ENCODE measurements at regions of chr2 and their contacts with region 1.

Region 1: GRCh38 chr2:65554765-65555591 is 122.6 kb upstream of the SPRED2 start:
- DNase-seq: no peak
- H3K4me3 ChIP-seq: no peak overlapping the region
- CTCF ChIP-seq: no peak
- POLR2A ChIP-seq: no peak

Region 2: DNA sequence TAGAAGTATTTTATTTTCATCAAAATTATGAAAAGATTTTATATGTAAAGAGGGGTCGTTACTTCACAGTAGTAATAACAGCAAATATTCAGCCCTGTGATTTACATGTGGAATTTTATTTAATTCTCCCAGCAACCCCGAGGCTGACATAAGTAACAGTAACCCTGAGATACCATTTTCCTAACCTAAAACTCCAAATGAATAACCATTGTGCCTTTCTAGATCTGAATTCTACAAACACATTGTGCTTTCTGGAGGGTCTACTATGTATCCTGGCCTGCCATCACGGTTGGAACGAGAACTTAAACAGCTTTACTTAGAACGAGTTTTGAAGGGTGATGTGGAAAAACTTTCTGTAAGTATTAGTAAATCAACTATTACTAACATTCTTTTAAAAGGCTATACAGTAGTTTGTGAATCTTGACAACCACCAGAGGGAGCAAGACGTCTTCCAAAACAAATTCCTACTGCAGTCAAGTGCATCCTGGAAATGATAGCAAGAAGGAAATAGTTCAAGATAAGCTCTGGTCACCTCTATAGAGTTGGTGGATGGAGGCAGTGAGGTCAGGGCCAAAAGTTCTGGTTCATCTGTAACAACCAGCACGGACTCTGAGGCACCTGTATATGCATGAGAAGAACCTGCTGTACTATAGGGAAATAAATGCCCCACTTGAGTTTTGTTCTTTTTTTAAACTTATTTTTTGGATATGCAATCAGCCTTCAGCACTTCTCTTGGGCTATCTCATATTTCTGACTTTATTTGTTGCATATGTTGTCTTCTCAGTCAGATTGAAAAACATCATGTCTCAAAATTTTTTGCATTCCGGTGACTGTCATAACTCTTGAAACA is 289.9 kb before region 1 on chr2:
- intact Hi-C with region 1: loop called (anchors 5 kb)
- DNase-seq: peak in 1 of 2 donors; percentile 24
- H3K4me3 ChIP-seq: no peak overlapping the region
- CTCF ChIP-seq: no peak
- POLR2A ChIP-seq: no peak

Region 3: DNA sequence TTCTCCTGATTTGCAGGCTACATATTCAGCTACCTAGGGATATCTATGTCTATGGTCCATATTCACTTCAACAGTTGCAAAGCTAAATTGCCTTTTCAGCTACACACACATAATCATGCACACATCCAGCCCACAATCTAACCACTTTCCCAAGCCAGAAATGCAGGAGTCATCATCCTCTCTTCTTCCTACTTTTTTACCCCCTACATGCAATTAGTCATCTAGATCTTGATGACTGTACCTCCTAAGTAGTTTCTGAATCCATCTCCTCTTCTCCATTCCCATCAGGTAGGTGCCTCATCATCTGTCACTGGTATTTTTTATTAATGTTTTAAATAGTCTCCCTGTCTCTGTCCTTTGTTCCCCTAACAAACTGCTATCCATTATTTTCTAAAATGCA is 98.9 kb before region 1 on chr2:
- intact Hi-C with region 1: no loop called
- DNase-seq: no peak
- H3K4me3 ChIP-seq: no peak overlapping the region
- CTCF ChIP-seq: no peak
- POLR2A ChIP-seq: no peak

Measured in lower leg skin (tissue), 4 donors.